Activated T-helper 1 cell treated with anti-CD3 and anti-CD28 coated beads, Interleukin-12 subunit alpha, Interleukin-12 subunit beta, Interleukin-2, Interleukin-4 antibody, amounts not matched to agents 30 ng/mL and 10 ng/mL and 1 ng/mL, durations not matched to agents 14 hours and 24 hours and 36 hours (primary cell): ENCODE measurements at regions of chr4 and their contacts with region 1.

Region 1: DNA sequence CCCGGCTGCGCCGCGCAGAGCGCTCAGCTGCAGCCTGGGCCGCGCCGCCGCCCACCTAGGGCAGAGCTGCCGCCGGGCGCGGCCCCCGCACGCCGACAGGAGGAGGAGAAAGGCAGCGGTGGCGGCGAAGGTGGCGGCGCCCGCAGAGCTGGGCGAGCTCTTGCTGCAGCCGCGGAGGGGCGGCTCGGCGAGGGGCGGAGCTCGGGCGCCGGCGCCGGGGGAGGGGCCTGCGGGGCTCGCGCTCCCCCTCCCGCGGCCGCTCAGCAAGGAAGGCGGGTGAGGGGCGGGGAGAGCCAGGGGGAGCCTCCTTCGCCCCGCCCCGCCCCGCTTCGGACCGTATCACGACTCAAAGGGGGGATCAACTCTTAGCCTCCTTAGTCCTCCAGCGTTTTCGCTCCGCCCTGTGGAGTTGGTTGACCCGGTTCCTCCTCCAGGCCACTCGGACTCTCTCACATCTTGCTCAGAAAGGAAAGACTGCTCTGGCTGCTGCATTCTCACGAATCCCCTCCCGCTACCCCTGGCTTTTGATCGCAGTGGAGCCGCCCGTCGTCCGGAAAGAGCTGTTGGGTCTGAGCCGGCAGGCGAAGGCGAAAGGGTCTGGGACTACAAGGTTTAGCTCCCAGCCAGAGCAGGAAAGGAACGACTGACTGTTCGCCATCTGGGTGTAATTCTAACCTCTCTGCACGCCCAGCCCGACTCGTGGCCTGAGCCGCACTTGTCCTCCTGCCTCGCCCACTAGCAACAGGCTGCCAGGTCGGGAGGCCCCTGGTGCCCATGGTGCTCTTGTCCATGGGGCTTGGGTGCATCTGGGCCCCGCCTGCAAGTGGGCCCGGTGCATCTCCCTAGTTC is at the start of gene ATP8A1:
- DNase-seq: peak; percentile 90
- H3K4me3 Mint-ChIP-seq: peak within 1 kb of the TSS; percentile 94
- H3K27ac Mint-ChIP-seq: peak within 1 kb of the TSS; percentile 96
- H3K4me1 Mint-ChIP-seq: peaks cover 45% of the 10 kb centered on the region
- H3K27me3 Mint-ChIP-seq: no peaks in the 10 kb centered on the region
- total RNA-seq, gene ATP8A1: 18.2 and 25.8 TPM in 2 replicates

Region 2: GRCh38 chr4:41913509-41913908 is 743.7 kb before region 1 on chr4:
- intact Hi-C with region 1: no loop called
- DNase-seq: no peak
- H3K4me3 Mint-ChIP-seq: no peak overlapping the region
- H3K27ac Mint-ChIP-seq: no peak overlapping the region
- H3K4me1 Mint-ChIP-seq: peaks cover 6% of the 10 kb centered on the region
- H3K27me3 Mint-ChIP-seq: no peaks in the 10 kb centered on the region

Region 3: DNA sequence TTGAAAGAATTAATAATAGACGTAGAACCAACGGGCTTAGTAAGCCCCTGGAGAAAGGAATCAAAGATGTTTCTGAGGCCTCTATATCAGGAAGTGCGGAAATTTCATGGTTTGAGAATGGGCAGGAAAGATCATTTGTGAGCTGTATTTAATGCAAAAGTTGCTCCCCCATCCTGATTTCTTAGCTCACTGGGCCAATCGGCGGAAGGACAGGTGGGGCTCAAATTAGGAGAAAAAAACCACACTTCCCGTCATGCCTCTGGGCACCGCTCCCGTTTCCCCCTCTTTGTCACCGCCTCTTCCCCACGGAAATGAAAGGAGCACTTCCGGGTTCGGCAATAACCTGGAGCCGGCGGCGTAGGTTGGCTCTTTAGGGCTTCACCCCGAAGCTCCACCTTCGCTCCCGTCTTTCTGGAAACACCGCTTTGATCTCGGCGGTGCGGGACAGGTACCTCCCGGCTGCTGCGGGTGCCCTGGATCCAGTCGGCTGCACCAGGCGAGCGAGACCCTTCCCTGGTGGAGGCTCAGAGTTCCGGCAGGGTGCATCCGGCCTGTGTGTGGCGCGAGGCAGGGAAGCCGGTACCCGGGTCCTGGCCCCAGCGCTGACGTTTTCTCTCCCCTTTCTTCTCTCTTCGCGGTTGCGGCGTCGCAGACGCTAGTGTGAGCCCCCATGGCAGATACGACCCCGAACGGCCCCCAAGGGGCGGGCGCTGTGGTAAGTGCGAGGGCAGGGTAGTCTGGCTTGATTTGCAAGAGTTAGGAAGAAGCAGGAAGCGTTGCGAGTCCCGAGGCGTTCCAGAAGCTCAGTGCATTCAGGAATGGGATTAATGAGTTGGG is 722.1 kb before region 1 on chr4 and contains the start of gene TMEM33:
- intact Hi-C with region 1: loop called (anchors 10 kb)
- DNase-seq: peak; percentile 69
- H3K4me3 Mint-ChIP-seq: peak within 1 kb of the TSS; percentile 99
- H3K27ac Mint-ChIP-seq: peak within 1 kb of the TSS; percentile 93
- H3K4me1 Mint-ChIP-seq: peaks cover 59% of the 10 kb centered on the region
- H3K27me3 Mint-ChIP-seq: no peaks in the 10 kb centered on the region
- total RNA-seq, gene TMEM33: 97.8 and 106 TPM in 2 replicates

Region 4: GRCh38 chr4:41990365-41991111 is 666.6 kb before region 1 on chr4 and contains the start of gene SLC30A9:
- intact Hi-C with region 1: loop called (anchors 5 kb)
- DNase-seq: peak; percentile 91
- H3K4me3 Mint-ChIP-seq: peak within 1 kb of the TSS; percentile 99
- H3K27ac Mint-ChIP-seq: peak within 1 kb of the TSS; percentile 92
- H3K4me1 Mint-ChIP-seq: peaks cover 28% of the 10 kb centered on the region
- H3K27me3 Mint-ChIP-seq: no peaks in the 10 kb centered on the region
- total RNA-seq, gene SLC30A9: 40.4 and 43.2 TPM in 2 replicates

Region 5: GRCh38 chr4:42568610-42569207 is 88.5 kb before region 1 on chr4:
- intact Hi-C with region 1: loop called (anchors 2 kb)
- DNase-seq: peak; percentile 25
- H3K4me3 Mint-ChIP-seq: no peak overlapping the region
- H3K27ac Mint-ChIP-seq: no peak overlapping the region
- H3K4me1 Mint-ChIP-seq: no peaks in the 10 kb centered on the region
- H3K27me3 Mint-ChIP-seq: no peaks in the 10 kb centered on the region

Region 6: DNA sequence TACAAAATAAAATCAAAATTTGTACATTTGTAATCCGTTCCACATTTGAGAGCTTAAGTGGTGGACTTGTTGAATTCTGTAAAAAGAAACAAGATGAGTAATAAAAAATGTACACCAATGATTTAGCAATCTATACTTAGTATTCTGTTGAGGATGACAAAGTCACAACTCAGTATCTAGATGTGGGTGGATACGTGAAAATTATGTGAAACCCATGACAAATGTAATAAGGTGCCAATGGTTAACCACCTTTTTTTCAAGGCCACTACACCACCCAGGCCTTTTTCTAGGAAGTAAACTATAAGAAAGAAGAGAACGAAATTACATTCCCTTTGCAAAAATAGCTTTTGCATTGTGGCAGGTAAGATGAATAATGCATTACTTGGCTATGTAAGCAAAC is 77.3 kb before region 1 on chr4:
- intact Hi-C with region 1: loop called (anchors 1 kb)
- DNase-seq: no peak
- H3K4me3 Mint-ChIP-seq: no peak overlapping the region
- H3K27ac Mint-ChIP-seq: peak overlapping the region; percentile 34
- H3K4me1 Mint-ChIP-seq: peaks cover 12% of the 10 kb centered on the region
- H3K27me3 Mint-ChIP-seq: no peaks in the 10 kb centered on the region

Region 7: GRCh38 chr4:42627885-42628646 is 29.1 kb before region 1 on chr4:
- intact Hi-C with region 1: loop called (anchors 1 kb)
- DNase-seq: peak; percentile 19
- H3K4me3 Mint-ChIP-seq: peak overlapping the region; percentile 34
- H3K27ac Mint-ChIP-seq: peak overlapping the region; percentile 90
- H3K4me1 Mint-ChIP-seq: peaks cover 36% of the 10 kb centered on the region
- H3K27me3 Mint-ChIP-seq: no peaks in the 10 kb centered on the region

Region 8: GRCh38 chr4:42673082-42673425 is 15.9 kb after region 1 on chr4:
- intact Hi-C with region 1: loop called (anchors 1 kb)
- DNase-seq: no peak
- H3K4me3 Mint-ChIP-seq: peak overlapping the region; percentile 41
- H3K27ac Mint-ChIP-seq: peak overlapping the region; percentile 89
- H3K4me1 Mint-ChIP-seq: peaks cover 37% of the 10 kb centered on the region
- H3K27me3 Mint-ChIP-seq: no peaks in the 10 kb centered on the region

Region 9: DNA sequence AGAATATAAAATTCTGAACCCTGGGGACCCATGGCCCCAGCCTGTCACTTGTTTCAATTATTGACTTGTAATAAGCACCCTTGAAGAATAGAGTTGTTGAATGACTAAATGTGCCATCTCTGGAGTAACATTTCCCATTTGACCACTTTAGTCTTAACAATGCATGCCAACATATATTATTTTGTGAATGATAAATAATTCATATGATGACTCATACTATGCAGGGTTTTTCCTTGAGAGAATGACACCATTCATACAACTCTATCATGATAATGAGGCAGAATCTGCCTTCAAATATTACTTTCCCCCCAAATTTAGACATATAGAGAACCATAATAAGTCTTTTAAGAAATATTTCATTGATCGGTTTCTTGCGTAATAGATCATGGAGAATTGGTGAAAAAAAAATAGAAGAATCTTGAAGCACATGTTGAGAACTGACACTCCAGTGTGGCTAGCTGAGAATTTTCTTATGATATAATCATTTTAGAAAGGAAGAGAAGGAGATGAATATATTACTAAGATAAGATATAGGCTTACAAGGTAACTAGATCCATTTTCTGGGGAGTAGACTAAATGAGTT is 639.9 kb after region 1 on chr4:
- intact Hi-C with region 1: no loop called
- DNase-seq: no peak
- H3K4me3 Mint-ChIP-seq: no peak overlapping the region
- H3K27ac Mint-ChIP-seq: no peak overlapping the region
- H3K4me1 Mint-ChIP-seq: no peaks in the 10 kb centered on the region
- H3K27me3 Mint-ChIP-seq: no peaks in the 10 kb centered on the region